Activated T-helper 1 cell treated with anti-CD3 and anti-CD28 coated beads, Interleukin-12 subunit alpha, Interleukin-12 subunit beta, Interleukin-2, Interleukin-4 antibody, amounts not matched to agents 30 ng/mL and 10 ng/mL and 1 ng/mL, durations not matched to agents 14 hours and 24 hours and 36 hours (primary cell): ENCODE measurements at regions of chr3 and their contacts with region 1.

Region 1: GRCh38 chr3:113838631-113839209 is at the start of gene GRAMD1C:
- DNase-seq: peak; percentile 79
- H3K4me3 Mint-ChIP-seq: peak within 1 kb of the TSS; percentile 79
- H3K27ac Mint-ChIP-seq: no peak within 1 kb of the TSS
- H3K4me1 Mint-ChIP-seq: peaks cover 8% of the 10 kb centered on the region
- H3K27me3 Mint-ChIP-seq: peaks cover 12% of the 10 kb centered on the region
- total RNA-seq, gene GRAMD1C: 0.05 TPM in 1 of 2 replicates, not detected in the other

Region 2: DNA sequence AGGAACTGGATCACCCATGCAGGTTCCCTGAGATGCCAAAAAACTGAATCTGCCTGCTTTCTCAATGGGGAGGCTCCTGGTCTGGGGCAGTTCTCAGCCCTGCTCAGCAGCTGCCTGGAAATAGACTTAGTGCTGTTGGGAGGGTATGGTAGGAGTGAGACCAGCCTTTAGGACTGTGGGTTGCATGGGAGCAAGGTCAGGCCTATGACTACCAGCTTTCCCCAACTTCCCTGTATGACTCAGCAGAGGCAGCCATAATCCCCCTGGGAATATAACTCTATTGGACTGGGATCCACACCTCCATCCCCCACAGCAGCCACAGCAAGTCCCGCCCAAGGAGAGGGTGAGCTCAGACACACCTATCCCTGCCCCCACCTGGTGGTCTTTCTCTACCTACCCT is 484.4 kb before region 1 on chr3:
- intact Hi-C with region 1: no loop called
- DNase-seq: no peak
- H3K4me3 Mint-ChIP-seq: no peak overlapping the region
- H3K27ac Mint-ChIP-seq: no peak overlapping the region
- H3K4me1 Mint-ChIP-seq: no peaks in the 10 kb centered on the region
- H3K27me3 Mint-ChIP-seq: no peaks in the 10 kb centered on the region

Region 3: GRCh38 chr3:113736548-113737089 is 102.1 kb before region 1 on chr3:
- intact Hi-C with region 1: loop called (anchors 1 kb)
- DNase-seq: peak; percentile 12
- H3K4me3 Mint-ChIP-seq: no peak overlapping the region
- H3K27ac Mint-ChIP-seq: no peak overlapping the region
- H3K4me1 Mint-ChIP-seq: peaks cover 19% of the 10 kb centered on the region
- H3K27me3 Mint-ChIP-seq: no peaks in the 10 kb centered on the region

Region 4: GRCh38 chr3:113802795-113803455 is 35.8 kb before region 1 on chr3:
- intact Hi-C with region 1: no loop called
- DNase-seq: no peak
- H3K4me3 Mint-ChIP-seq: no peak overlapping the region
- H3K27ac Mint-ChIP-seq: no peak overlapping the region
- H3K4me1 Mint-ChIP-seq: peaks cover 10% of the 10 kb centered on the region
- H3K27me3 Mint-ChIP-seq: no peaks in the 10 kb centered on the region

Region 5: DNA sequence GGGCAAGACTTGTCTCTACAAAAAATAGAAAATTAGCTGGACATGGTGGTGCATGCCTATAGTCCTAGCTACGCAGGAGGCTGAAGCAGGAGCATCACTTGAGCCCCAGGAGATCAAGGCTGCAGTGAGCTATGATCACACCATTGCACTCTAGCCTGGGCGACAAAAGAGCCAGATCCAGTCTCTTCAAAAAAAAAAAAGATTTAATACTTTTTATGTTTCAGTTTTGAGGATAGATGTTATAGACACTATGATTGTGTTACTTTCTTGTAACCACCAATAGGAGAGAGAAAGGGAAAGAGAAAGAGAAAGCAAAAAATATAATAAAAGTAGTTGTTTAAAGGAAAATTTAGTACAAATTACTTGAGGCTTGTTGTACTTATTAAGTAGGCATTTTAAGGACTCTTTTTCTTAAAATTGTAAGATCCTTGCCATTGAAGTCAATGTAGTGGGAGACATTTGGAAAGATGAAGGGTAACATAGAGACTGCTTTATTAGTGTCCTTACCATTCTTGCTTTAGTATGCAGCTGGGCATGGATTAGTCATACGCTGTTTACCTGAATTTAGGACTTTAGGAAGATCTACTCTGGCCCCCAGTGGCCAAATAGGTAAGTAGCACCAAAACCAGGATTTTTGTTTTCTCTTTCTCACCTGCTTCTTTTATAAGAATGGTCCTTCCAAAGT is 74.0 kb after region 1 on chr3:
- intact Hi-C with region 1: loop called (anchors 1 kb)
- DNase-seq: peak; percentile 8
- H3K4me3 Mint-ChIP-seq: no peak overlapping the region
- H3K27ac Mint-ChIP-seq: no peak overlapping the region
- H3K4me1 Mint-ChIP-seq: peaks cover 7% of the 10 kb centered on the region
- H3K27me3 Mint-ChIP-seq: no peaks in the 10 kb centered on the region

Region 6: GRCh38 chr3:113947372-113948014 is 108.8 kb after region 1 on chr3 and contains the start of gene ZDHHC23:
- intact Hi-C with region 1: loop called (anchors 2 kb)
- DNase-seq: peak; percentile 66
- H3K4me3 Mint-ChIP-seq: peak within 1 kb of the TSS; percentile 85
- H3K27ac Mint-ChIP-seq: peak within 1 kb of the TSS; percentile 79
- H3K4me1 Mint-ChIP-seq: no peaks in the 10 kb centered on the region
- H3K27me3 Mint-ChIP-seq: peaks cover 41% of the 10 kb centered on the region
- total RNA-seq, gene ZDHHC23: 0.88 and 1.8 TPM in 2 replicates